ENCODE measurements at regions of chr3 and their contacts with region 1.

Region 1: DNA sequence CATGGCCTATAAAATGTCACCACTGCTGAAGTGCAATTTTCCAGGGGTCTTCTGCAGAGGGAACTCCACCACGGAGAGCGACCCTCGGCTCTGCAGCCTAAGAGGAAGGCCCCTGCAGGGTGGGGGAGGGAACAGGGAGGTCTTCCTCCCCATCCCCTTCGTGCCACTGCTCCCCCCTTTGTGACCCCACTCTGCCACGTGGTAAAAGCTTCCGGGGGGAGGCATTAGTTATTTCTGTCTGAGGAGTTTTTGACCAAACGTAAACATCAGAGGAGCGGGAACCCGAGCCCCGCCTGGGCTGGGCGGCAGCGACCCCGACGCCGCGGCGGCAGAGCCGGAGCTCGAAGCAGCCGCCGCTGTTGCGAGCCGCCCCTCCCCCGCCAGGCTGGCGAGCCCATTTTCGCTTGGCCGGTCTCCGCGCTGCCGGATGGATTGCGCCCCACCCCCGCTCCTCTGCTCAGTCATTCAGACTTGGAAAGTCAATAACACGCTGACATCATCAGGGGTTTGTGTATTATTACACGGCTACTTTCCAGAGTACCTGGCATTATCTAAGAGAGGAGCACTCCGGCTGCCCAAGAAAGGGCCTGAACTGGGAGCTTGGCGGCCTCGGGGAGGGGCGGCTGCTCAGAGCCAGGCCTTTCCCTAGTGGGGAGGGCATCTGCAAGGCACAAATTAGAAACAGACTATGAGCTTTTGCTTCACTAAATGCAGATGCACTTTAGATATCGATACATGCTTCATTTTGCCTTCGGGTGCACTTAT is 162.5 kb upstream of the TBL1XR1 start:
- DNase-seq: peak; percentile 98
- H3K4me3 ChIP-seq: peak overlapping the region in 2 of 3 experiments; percentile 16 to 43
- H3K27ac ChIP-seq: peak overlapping the region; percentile 98
- H3K4me1 ChIP-seq: peaks cover 50% of the 10 kb centered on the region
- H3K27me3 ChIP-seq: no peaks in the 10 kb centered on the region
- CTCF ChIP-seq: no peak
- POLR2A ChIP-seq: no peak

Region 2: DNA sequence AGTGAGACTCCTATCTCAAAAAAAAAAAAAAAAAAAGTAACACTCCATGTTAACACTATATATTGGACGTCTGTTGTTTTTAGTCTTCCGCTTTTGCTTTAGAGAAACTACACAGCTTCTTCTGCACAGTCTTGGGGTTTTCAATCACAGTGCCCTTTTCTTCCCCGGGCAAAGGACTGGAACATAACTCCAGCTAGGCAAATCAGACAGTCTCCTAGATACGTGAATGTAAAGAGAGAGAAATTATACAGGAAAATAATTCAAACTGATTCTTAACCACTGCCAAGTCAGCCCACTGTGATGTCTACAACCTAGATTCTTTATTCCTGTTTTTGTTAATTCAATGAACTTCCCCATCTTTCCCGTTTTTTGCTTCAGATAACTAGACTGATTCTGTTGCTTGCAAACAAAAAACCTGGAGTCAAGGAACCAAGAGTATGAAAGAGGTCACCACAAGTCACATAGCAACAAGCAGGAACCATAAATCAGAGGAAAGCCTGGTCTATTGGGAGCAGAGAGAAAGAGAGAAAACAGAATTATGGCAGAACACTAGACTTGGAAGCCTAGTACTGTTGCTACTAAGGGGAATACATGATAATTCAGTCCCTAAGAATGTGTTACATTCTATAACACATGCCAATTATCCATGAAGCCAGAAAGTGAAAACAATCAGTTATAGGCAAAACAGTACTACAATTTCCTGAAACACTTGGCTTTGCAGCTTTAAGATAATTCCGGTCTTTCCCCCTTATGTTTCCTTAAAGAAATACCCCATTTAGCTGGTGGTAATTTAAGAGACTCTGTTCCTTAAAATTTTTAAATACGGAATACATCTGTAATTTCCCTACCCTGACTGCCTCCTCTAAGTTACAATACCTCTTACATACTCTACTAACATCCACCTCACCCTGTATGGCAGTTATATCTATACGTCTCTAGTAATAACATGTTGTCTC is 225.6 kb before region 1 on chr3:
- CTCF ChIA-PET with region 1: interaction called, 3 read pairs
- POLR2A ChIA-PET with region 1: no interaction called
- dilution Hi-C with region 1: no loop called
- intact Hi-C with region 1: loop called (anchors 5 kb)
- DNase-seq: peak; percentile 86
- H3K4me3 ChIP-seq: no peak overlapping the region
- H3K27ac ChIP-seq: peak overlapping the region; percentile 16
- H3K4me1 ChIP-seq: peaks cover 8% of the 10 kb centered on the region
- H3K27me3 ChIP-seq: no peaks in the 10 kb centered on the region
- CTCF ChIP-seq: no peak
- POLR2A ChIP-seq: no peak

Region 3: GRCh38 chr3:177345049-177345972 is 14.5 kb before region 1 on chr3:
- CTCF ChIA-PET with region 1: interaction called, 24 read pairs
- POLR2A ChIA-PET with region 1: interaction called, 5 read pairs
- dilution Hi-C with region 1: no loop called
- intact Hi-C with region 1: loop called (anchors 1 kb)
- DNase-seq: peak; percentile 97
- H3K4me3 ChIP-seq: peak overlapping the region in 1 of 3 experiments; percentile 28
- H3K27ac ChIP-seq: peak overlapping the region; percentile 99
- H3K4me1 ChIP-seq: peaks cover 34% of the 10 kb centered on the region
- H3K27me3 ChIP-seq: no peaks in the 10 kb centered on the region
- CTCF ChIP-seq: no peak
- POLR2A ChIP-seq: peak; percentile 57

Region 4: DNA sequence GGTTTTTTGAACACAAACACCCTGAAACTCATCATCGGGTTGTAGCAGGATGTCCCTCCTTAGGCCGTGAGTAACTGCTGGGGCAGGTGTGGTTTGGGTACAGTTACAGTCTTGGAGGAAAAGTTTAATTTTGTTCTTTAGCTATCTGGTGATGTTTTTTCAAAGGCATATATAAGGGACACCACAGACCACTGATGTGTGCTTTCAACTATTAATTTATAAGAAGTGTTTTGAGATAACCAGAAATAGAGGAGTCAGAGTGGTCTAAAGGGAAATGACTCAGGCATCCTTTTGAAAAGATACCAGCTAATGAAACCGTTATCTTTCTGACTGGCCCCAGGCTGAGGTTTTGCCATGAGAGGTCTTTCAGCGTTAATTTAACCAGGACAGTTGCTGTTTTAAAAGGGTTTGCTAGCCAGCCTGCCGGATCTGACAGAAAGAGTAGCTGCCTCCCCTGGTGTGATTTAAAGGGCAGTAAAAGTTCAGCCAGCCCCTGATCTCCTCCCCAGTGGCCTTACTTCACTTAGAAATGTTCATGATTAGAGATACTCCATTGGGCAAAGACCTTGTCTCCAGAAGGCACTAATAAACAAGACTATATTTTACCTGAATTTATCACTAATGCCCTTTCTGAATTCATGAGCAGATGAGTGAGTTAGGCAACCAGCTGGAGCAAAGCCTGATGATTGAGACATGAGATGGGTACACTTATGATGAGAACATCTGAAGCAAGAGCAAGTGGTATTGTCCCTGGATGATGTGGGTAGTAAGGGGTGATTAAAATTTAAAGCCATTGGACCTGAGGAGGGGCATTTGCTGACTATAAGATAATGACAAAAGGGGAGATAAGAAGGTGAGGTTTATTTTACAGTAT is 320.0 kb after region 1 on chr3:
- CTCF ChIA-PET with region 1: interaction called, 3 read pairs
- POLR2A ChIA-PET with region 1: no interaction called
- dilution Hi-C with region 1: no loop called
- intact Hi-C with region 1: loop called (anchors 1 kb)
- DNase-seq: peak; percentile 76
- H3K4me3 ChIP-seq: no peak overlapping the region
- H3K27ac ChIP-seq: peak overlapping the region; percentile 72
- H3K4me1 ChIP-seq: peaks cover 45% of the 10 kb centered on the region
- H3K27me3 ChIP-seq: no peaks in the 10 kb centered on the region
- CTCF ChIP-seq: no peak
- POLR2A ChIP-seq: no peak

Region 5: GRCh38 chr3:178078953-178079352 is 719.2 kb after region 1 on chr3:
- CTCF ChIA-PET with region 1: interaction called, 3 read pairs
- POLR2A ChIA-PET with region 1: no interaction called
- dilution Hi-C with region 1: no loop called
- intact Hi-C with region 1: loop called (anchors 1 kb)
- DNase-seq: peak; percentile 99
- H3K4me3 ChIP-seq: no peak overlapping the region
- H3K27ac ChIP-seq: peak overlapping the region; percentile 81
- H3K4me1 ChIP-seq: peaks cover 26% of the 10 kb centered on the region
- H3K27me3 ChIP-seq: no peaks in the 10 kb centered on the region
- CTCF ChIP-seq: no peak
- POLR2A ChIP-seq: no peak

Region 6: GRCh38 chr3:178325330-178325729 is 965.6 kb after region 1 on chr3:
- CTCF ChIA-PET with region 1: interaction called, 4 read pairs
- POLR2A ChIA-PET with region 1: no interaction called
- dilution Hi-C with region 1: no loop called
- intact Hi-C with region 1: loop called (anchors 1 kb)
- DNase-seq: peak; percentile 76
- H3K4me3 ChIP-seq: no peak overlapping the region
- H3K27ac ChIP-seq: peak overlapping the region; percentile 2
- H3K4me1 ChIP-seq: peaks cover 13% of the 10 kb centered on the region
- H3K27me3 ChIP-seq: no peaks in the 10 kb centered on the region
- CTCF ChIP-seq: peak in 1 of 2 donors; percentile 15
- POLR2A ChIP-seq: no peak